PC-9 (cell line): ENCODE measurements at regions of chr9 and their contacts with region 1.

Region 1: GRCh38 chr9:75027187-75028107 is 646 bp downstream of the CARNMT1 start:
- DNase-seq: peak; percentile 47 to 60
- H3K4me3 ChIP-seq: peak overlapping the region; percentile 65
- H3K27ac ChIP-seq: peak overlapping the region; percentile 77
- H3K4me1 ChIP-seq: peaks cover 34% of the 10 kb centered on the region
- H3K27me3 ChIP-seq: no peaks in the 10 kb centered on the region
- CTCF ChIP-seq: no peak

Region 2: GRCh38 chr9:74711341-74711740 is 316.1 kb before region 1 on chr9:
- CTCF ChIA-PET with region 1: no interaction called
- POLR2A ChIA-PET with region 1: no interaction called
- intact Hi-C with region 1: no loop called
- DNase-seq: no peak
- H3K4me3 ChIP-seq: no peak overlapping the region
- H3K27ac ChIP-seq: no peak overlapping the region
- H3K4me1 ChIP-seq: no peaks in the 10 kb centered on the region
- H3K27me3 ChIP-seq: no peaks in the 10 kb centered on the region
- CTCF ChIP-seq: no peak

Region 3: DNA sequence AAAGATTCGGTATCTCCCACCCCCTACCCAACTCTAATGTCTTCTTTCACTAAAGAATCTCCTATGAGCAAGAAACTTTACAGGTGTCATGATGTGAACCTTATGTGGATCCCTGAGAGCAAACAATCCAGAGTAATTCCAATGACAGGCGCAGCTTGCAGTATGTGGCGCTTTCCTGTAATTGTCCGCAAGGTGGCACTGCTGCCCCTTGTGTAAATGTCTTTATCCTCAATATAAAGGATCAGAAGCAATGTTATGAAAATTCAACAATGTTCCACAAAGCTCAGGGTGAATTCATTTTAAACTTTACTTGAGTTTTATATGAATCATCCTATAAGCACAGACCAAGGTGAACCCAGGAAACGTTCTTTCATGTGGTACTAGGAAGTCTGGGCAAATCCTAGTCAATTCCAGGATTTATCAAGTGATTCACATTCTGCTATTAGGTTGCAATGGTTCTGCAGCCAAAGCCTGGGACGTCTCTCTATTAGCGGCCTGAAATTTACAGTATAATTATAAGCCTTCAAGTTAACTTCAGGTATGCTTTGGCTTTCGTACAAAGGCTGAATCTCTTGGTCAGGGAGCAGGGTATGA is 253.5 kb before region 1 on chr9:
- CTCF ChIA-PET with region 1: interaction called, 6 read pairs
- POLR2A ChIA-PET with region 1: no interaction called
- intact Hi-C with region 1: loop called (anchors 1 kb)
- DNase-seq: peak; percentile 46 to 70
- H3K4me3 ChIP-seq: no peak overlapping the region
- H3K27ac ChIP-seq: no peak overlapping the region
- H3K4me1 ChIP-seq: no peaks in the 10 kb centered on the region
- H3K27me3 ChIP-seq: no peaks in the 10 kb centered on the region
- CTCF ChIP-seq: peak; percentile 89

Region 4: GRCh38 chr9:74952281-74953151 is 74.9 kb before region 1 on chr9 and contains the start of gene C9orf40:
- CTCF ChIA-PET with region 1: interaction called, 11 read pairs
- POLR2A ChIA-PET with region 1: interaction called, 11 read pairs
- intact Hi-C with region 1: loop called (anchors 5 kb)
- DNase-seq: peak; percentile 66 to 89
- H3K4me3 ChIP-seq: peak within 1 kb of the TSS; percentile 97
- H3K27ac ChIP-seq: peak within 1 kb of the TSS; percentile 60
- H3K4me1 ChIP-seq: peaks cover 6% of the 10 kb centered on the region; the same call in 1 of the 2 replicates
- H3K27me3 ChIP-seq: no peaks in the 10 kb centered on the region
- CTCF ChIP-seq: peak; percentile 83
- total RNA-seq, gene C9orf40: 10.8 and 11.3 TPM in 2 replicates

Region 5: DNA sequence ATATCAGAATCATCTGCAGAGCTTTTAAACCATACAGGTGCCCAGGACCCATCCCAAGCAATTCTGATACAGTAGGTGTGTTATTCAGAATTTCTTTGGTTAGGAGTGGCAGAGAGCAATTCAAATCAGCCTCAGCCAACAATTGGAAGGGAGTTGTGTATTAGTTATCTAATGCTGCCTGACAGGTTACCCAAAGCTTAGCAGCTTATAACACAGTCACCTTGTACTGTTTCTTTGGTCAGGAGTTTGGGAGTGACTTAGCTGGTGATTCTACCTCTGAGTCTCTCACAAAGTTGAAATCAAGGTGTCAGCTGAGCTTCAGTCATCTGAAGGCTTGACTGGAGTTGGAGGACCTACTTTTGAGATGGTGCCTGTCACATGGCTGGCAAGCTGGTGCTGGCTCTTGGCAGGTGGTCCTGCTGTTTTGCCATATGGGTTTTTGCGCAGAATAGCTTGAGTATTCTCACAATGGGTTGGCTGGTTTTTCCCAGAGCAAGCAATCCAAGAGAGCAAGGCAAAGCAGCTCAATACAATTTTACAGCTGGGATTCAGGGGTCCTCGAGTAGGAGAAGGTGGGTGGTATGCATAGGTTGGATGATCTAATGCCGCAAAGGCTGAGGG is 19.4 kb after region 1 on chr9:
- CTCF ChIA-PET with region 1: no interaction called
- POLR2A ChIA-PET with region 1: no interaction called
- intact Hi-C with region 1: no loop called
- DNase-seq: no peak
- H3K4me3 ChIP-seq: no peak overlapping the region
- H3K27ac ChIP-seq: no peak overlapping the region
- H3K4me1 ChIP-seq: no peaks in the 10 kb centered on the region
- H3K27me3 ChIP-seq: 0 out of 2 replicates have a peak, but pooled peaks cover 4% of the 10 kb centered on the region
- CTCF ChIP-seq: no peak

Region 6: GRCh38 chr9:75088260-75088905 is 60.9 kb after region 1 on chr9 and contains the start of gene OSTF1:
- CTCF ChIA-PET with region 1: no interaction called
- POLR2A ChIA-PET with region 1: interaction called, 20 read pairs
- intact Hi-C with region 1: loop called (anchors 1 kb)
- DNase-seq: peak; percentile 84 to 98
- H3K4me3 ChIP-seq: peak within 1 kb of the TSS; percentile 78
- H3K27ac ChIP-seq: peak within 1 kb of the TSS; percentile 81
- H3K4me1 ChIP-seq: peaks cover 26% of the 10 kb centered on the region
- H3K27me3 ChIP-seq: no peaks in the 10 kb centered on the region
- CTCF ChIP-seq: no peak
- total RNA-seq, gene OSTF1: 42.0 and 58.4 TPM in 2 replicates

Region 7: DNA sequence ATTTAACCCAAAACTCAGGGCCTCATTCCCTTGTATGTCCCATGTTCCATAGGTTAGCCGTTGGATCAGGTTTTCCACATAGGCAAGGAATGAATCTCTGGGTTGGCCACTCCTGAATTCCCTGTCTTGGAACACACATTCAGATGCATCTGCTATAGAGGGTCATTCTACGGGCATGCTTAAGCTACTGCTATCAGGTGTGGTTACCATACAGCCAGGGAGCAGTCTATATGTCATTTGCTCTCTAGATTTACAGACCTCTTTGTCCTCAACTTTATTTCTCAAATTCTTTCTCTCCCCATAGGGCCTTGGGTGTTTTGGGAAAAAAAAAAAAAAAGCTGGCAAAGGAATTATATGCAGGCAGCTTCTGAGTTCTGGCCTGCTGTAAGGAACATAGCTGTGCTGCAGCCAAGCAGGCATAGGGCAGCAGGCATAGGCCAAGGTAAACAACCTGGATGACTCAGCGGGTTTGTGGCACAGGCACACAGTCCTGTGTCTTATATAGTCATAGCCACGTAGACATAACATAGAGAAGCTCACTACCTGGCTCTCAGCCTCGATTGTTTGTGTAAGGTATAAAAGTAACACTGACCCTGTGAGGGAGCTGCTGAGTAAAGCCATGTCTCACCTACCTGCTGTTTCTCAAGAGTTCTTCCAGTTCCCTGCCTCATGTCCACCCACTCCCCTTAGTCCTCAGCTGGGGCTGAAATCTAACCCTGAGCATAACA is 202.3 kb after region 1 on chr9:
- CTCF ChIA-PET with region 1: no interaction called
- POLR2A ChIA-PET with region 1: no interaction called
- intact Hi-C with region 1: loop called (anchors 5 kb)
- DNase-seq: peak; percentile 75 to 94
- H3K4me3 ChIP-seq: no peak overlapping the region
- H3K27ac ChIP-seq: peak overlapping the region; percentile 82
- H3K4me1 ChIP-seq: peaks cover 45% of the 10 kb centered on the region
- H3K27me3 ChIP-seq: no peaks in the 10 kb centered on the region
- CTCF ChIP-seq: no peak; the same call in 1 of the 2 replicates